ENCODE measurements at regions of chr4 and their contacts with region 1.

Region 1: GRCh38 chr4:42151568-42152506 is 618 bp downstream of the BEND4 start:
- DNase-seq: peak; percentile 67
- H3K4me3 Mint-ChIP-seq: peak overlapping the region; percentile 72
- H3K27ac Mint-ChIP-seq: no peak overlapping the region
- H3K4me1 Mint-ChIP-seq: peaks cover 12% of the 10 kb centered on the region
- H3K27me3 Mint-ChIP-seq: peaks cover 49% of the 10 kb centered on the region

Region 2: DNA sequence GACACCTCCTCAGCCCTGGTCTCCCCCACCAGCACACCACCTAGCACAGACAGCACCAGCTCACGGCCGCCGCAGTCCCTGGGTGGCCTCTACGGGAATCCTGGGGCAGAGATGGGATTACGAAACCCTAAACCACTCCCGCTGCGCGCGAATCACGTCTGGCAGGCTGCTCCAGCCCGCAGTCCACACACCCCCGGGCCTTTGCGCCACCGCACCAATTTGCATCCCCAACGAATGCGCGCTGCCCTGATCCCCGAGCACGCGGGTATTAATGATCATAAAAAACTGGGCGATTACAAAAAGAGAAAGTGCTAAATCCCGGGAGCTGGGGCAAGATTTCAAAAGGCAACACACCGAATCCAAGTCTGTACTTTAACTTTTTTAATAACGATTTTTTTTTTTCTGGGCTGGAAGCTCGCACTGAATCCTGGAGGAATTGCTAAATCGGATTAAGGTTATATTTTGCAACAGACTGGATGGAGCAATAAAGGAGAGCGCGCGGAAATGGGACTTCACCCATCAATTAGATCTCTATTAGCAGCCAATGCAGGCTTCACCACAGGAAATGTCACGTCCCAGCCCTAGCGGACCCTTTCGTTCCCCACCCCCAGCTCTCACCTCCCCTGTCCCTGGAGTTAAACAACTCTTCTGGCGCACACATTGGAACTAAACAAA is 286.4 kb before region 1 on chr4:
- intact Hi-C with region 1: loop called (anchors 5 kb)
- DNase-seq: no peak
- H3K4me3 Mint-ChIP-seq: no peak overlapping the region
- H3K27ac Mint-ChIP-seq: no peak overlapping the region
- H3K4me1 Mint-ChIP-seq: peaks cover 3% of the 10 kb centered on the region
- H3K27me3 Mint-ChIP-seq: peaks cover 74% of the 10 kb centered on the region

Region 3: DNA sequence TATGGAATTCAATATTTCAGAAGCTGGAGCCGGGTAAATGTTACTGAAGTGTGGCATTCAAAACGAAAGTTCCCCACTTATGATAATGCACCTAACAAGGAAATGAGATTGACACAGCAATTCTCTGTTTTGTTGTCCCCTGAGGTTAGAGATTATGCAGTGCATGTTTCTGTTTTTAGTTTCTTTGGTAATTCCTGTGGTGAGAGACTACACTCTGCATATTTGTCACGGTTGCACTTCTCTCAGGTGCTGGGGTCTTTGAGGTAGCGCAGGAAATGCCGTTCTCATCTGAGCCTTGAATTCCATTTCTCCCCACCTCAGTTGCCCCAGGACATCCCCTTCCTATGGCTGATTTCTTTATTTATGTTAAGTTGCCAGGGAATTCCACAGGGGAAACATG is 15.9 kb after region 1 on chr4:
- intact Hi-C with region 1: no loop called
- DNase-seq: no peak
- H3K4me3 Mint-ChIP-seq: no peak overlapping the region
- H3K27ac Mint-ChIP-seq: no peak overlapping the region
- H3K4me1 Mint-ChIP-seq: no peaks in the 10 kb centered on the region
- H3K27me3 Mint-ChIP-seq: no peaks in the 10 kb centered on the region